ENCODE measurements at regions of chr19 and their contacts with region 1.

Region 1: DNA sequence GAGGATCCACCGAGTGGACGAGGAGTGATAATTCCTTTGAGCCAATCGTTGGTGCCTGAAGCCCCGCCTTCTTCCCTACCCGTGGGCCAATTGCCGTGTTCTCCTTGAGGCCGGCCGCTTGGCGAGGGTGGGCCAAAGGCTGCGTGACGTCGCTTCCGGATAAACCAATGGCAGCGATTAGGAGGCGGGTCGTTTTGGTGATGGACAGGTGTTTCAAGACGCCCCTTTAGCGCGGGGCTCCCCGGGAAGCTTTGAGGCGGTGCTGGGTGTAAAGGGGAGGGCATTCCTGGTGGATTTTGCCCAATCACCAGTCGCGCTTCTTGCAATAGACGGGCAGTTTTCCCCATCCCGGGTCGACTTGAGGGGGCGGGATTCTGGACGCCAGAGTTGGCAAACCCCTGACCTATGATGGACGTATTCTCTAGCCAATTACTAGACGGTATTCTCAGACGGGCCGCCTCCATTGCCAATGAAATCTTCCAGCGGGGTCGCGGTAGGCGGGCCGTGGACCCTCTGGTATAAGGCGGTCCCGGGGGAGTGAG is 310 bp upstream of the PRMT1 start:
- H3K4me3 ChIP-seq: peak overlapping the region; percentile 76
- H3K27ac ChIP-seq: peak overlapping the region; percentile 94
- H3K4me1 ChIP-seq: peaks cover 22% of the 10 kb centered on the region
- CTCF ChIP-seq: no peak

Region 2: DNA sequence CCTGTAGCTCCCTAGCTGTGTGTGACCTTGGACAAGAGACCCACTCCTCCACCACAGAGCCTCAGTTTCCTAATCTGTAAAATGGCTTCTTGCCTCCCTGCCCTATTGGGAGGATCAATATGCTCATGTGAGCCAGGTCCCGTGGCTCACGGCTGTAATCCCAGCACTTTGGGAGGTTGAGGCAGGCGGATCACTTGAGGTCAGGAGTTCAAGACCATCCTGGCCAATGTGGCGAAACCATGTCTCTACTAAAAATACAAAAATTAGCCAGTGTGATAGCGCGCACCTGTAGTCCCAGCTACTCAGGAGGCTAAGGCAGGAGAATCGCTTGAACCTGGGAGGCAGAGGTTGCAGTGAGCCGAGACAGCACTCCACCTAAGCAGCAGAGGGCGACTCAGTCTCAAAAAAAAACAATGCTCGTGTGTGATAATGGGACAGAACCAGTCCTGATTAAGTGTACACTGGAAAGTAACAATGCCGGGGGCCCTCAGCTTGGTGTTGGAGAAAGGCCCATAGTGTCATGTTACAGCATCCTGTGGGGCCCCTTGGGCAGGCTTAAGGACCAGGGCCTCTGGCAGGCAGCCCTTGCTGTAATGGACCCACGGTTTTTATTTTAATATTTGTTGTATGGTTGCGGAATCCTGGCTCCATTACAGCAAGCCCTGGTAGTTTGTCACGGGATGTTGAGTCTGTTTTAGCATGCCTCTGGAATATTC is 173.7 kb before region 1 on chr19:
- CTCF ChIA-PET with region 1: interaction called, 12 read pairs
- POLR2A ChIA-PET with region 1: interaction called, 4 read pairs
- H3K4me3 ChIP-seq: no peak overlapping the region
- H3K27ac ChIP-seq: no peak overlapping the region; the same call in 1 of the 2 replicates
- H3K4me1 ChIP-seq: no peaks in the 10 kb centered on the region; the same call in 1 of the 2 replicates
- CTCF ChIP-seq: peak; percentile 89

Region 3: GRCh38 chr19:49570138-49570856 is 106.5 kb before region 1 on chr19:
- CTCF ChIA-PET with region 1: interaction called, 25 read pairs
- POLR2A ChIA-PET with region 1: interaction called, 5 read pairs
- H3K4me3 ChIP-seq: no peak overlapping the region
- H3K27ac ChIP-seq: no peak overlapping the region
- H3K4me1 ChIP-seq: peaks cover 19% of the 10 kb centered on the region
- CTCF ChIP-seq: peak; percentile 92

Region 4: GRCh38 chr19:49590071-49590970 is 86.4 kb before region 1 on chr19:
- CTCF ChIA-PET with region 1: interaction called, 5 read pairs
- POLR2A ChIA-PET with region 1: interaction called, 26 read pairs
- H3K4me3 ChIP-seq: peak overlapping the region; percentile 82
- H3K27ac ChIP-seq: peak overlapping the region; percentile 99
- H3K4me1 ChIP-seq: peaks cover 7% of the 10 kb centered on the region
- CTCF ChIP-seq: no peak; the same call in none of the 2 replicates

Region 5: GRCh38 chr19:49653211-49653759 is 23.5 kb before region 1 on chr19:
- CTCF ChIA-PET with region 1: interaction called, 18 read pairs
- POLR2A ChIA-PET with region 1: interaction called, 11 read pairs
- H3K4me3 ChIP-seq: no peak overlapping the region
- H3K27ac ChIP-seq: no peak overlapping the region
- H3K4me1 ChIP-seq: no peaks in the 10 kb centered on the region
- CTCF ChIP-seq: no peak

Region 6: DNA sequence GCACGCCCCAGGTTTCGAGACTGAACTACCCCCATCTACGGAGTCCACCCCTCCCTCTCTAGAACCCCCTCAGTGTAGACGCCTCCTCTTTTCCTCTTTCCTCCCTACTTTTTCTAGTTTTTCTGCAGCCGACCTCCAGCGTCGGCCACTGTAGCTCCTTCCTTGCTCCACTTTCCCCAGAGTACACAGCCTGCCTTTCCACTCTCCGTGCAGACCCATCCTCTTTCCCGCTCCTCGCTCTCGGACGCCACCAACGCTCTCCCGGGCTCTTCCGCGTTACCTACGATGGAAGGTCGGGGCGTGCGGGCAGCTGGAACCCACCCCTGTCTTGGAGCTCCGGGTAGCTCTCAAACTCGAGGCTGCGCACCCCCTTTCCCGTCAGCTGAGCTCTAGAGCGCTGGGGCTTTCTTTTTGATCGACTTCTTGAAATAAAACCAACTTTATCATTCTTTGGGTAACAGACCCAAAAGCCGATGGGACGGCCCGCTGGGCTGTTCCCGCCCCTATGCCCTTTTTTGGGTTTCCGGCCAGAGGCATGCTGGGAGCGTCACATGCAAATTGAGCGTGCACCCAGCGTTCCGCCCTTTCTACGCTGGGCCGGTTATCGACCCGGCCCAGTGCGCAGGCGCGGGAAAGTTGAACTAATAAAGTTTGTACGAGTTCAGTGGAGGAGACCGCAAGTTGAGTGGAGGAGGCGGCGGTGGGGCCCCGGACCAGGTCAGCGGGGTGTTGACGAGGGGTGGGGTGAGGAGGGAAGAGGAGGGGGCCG is 11.2 kb before region 1 on chr19 and contains the starts of genes BCL2L12 and IRF3:
- CTCF ChIA-PET with region 1: interaction called, 27 read pairs
- POLR2A ChIA-PET with region 1: interaction called, 56 read pairs
- H3K4me3 ChIP-seq: peak within 1 kb of the TSS; percentile 48
- H3K27ac ChIP-seq: peak within 1 kb of the TSS; percentile 87
- H3K4me1 ChIP-seq: peaks cover 6% of the 10 kb centered on the region
- CTCF ChIP-seq: peak; percentile 50; the same call in 1 of the 2 replicates

Region 7: DNA sequence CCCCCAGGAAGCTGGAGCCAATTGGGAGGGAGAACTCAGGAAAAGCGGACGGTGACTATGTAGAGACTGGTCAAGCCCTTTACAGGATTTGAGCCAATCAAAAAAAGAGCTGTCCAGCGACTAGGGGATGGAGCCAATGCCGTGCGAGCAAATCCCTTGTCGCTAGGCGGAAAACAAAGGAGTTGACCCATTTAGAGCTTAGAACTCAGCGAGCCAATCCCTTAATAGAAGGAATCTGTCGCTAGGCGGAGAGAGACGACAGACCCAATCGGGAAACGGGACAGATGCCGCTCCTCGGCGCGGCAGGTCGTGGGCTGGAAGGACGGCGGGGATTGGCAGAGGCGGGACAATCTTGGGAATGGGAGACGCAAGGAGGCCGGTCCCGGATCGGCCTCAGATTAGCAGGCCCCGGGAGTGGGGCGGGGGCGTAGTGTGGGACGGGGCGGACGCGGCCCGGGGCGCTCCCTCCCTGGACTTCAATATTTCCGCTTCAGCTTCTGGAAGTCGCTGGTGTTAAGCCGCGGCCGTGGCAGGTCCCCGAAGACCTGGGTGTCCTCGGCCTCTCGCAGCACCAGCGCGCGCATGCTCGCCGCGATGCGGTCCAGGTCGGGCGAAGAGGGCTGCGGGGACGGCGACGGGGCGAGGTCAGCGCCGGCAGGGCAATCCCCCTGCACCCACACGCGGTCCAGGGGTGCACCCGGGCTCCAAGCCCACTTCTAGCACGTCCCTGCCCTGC is 192.8 kb after region 1 on chr19:
- CTCF ChIA-PET with region 1: interaction called, 4 read pairs
- POLR2A ChIA-PET with region 1: interaction called, 23 read pairs
- H3K4me3 ChIP-seq: peak overlapping the region; percentile 40
- H3K27ac ChIP-seq: peak overlapping the region; percentile 92
- H3K4me1 ChIP-seq: peaks cover 25% of the 10 kb centered on the region
- CTCF ChIP-seq: no peak

Measured in HEK293 (cell line).